Caco-2 (cell line): ENCODE measurements at regions of chr5 and their contacts with region 1.

Region 1: GRCh38 chr5:132820162-132820754 is 7.2 kb downstream of the SOWAHA start:
- DNase-seq: peak; percentile 90
- H3K4me3 ChIP-seq: no peak overlapping the region
- H3K4me3 Mint-ChIP-seq: no peak overlapping the region
- H3K27ac Mint-ChIP-seq: no peak overlapping the region
- H3K4me1 ChIP-seq: no peaks in the 10 kb centered on the region; the same call in none of the 2 replicates
- H3K4me1 Mint-ChIP-seq: no peaks in the 10 kb centered on the region
- H3K27me3 ChIP-seq: no peaks in the 10 kb centered on the region
- H3K27me3 Mint-ChIP-seq: no peaks in the 10 kb centered on the region
- CTCF ChIP-seq: peak; percentile 89

Region 2: GRCh38 chr5:131857388-131857787 is 962.9 kb before region 1 on chr5:
- CTCF ChIA-PET with region 1: no interaction called
- POLR2A ChIA-PET with region 1: no interaction called
- intact Hi-C with region 1: no loop called
- DNase-seq: no peak
- H3K4me3 ChIP-seq: no peak overlapping the region
- H3K4me3 Mint-ChIP-seq: no peak overlapping the region
- H3K27ac Mint-ChIP-seq: no peak overlapping the region
- H3K4me1 ChIP-seq: no peaks in the 10 kb centered on the region
- H3K4me1 Mint-ChIP-seq: no peaks in the 10 kb centered on the region
- H3K27me3 ChIP-seq: no peaks in the 10 kb centered on the region
- H3K27me3 Mint-ChIP-seq: peaks cover 9% of the 10 kb centered on the region
- CTCF ChIP-seq: no peak

Region 3: GRCh38 chr5:132526290-132526973 is 293.8 kb before region 1 on chr5:
- CTCF ChIA-PET with region 1: interaction called, 11 read pairs
- POLR2A ChIA-PET with region 1: no interaction called
- intact Hi-C with region 1: loop called (anchors 1 kb)
- DNase-seq: peak; percentile 63 to 84
- H3K4me3 ChIP-seq: peak overlapping the region; percentile 19; the same call in 1 of the 2 replicates
- H3K4me3 Mint-ChIP-seq: peak overlapping the region; percentile 15
- H3K27ac Mint-ChIP-seq: no peak overlapping the region
- H3K4me1 ChIP-seq: no peaks in the 10 kb centered on the region
- H3K4me1 Mint-ChIP-seq: peaks cover under 1% of the 10 kb centered on the region
- H3K27me3 ChIP-seq: no peaks in the 10 kb centered on the region
- H3K27me3 Mint-ChIP-seq: peaks cover 1% of the 10 kb centered on the region
- CTCF ChIP-seq: peak; percentile 84 to 94

Region 4: DNA sequence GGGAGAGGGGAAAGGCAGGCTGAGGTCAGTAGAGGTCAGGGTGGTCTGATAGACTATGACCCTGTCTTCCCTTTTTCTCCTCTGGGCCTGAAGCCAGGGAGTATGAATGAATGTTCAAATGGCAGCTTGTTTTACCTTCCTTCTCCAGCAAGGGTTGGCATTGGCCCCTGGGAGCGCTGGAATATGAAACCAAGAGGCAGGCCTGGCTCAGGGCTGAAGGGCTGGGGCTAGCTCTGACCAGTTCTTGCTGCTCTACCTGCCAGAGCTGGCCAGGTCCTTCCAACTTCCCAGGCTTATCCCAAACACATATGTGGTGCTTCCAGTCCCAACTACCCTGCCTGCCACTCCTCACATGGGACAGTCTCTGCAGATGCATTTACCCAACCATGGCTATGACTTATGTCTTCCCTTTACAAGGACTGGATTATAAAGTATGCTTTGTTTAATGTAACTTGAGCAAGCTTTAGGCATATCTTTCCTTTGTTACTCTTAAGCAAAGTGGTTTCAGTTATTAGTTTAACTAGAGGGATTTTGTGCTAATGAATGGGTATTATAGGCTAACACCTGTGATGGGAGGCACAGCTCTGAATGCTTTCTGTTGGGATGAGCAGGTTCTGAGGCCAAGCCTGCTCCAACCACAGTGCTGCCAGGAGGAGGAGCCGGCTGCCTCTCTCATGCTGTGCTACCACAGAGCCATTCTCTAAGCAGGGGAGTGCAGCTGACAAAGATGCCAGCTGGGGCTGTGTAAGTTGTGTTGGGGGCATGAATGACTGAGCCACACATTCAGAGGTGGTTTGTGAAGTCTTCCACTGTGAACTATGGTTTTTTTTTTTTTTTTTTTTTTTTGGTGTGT is 66.9 kb before region 1 on chr5:
- CTCF ChIA-PET with region 1: interaction called, 141 read pairs
- POLR2A ChIA-PET with region 1: interaction called, 4 read pairs
- intact Hi-C with region 1: loop called (anchors 1 kb)
- DNase-seq: peak in 1 of 2 experiments; percentile 42
- H3K4me3 ChIP-seq: no peak overlapping the region
- H3K4me3 Mint-ChIP-seq: no peak overlapping the region
- H3K27ac Mint-ChIP-seq: no peak overlapping the region
- H3K4me1 ChIP-seq: no peaks in the 10 kb centered on the region
- H3K4me1 Mint-ChIP-seq: peaks cover 6% of the 10 kb centered on the region
- H3K27me3 ChIP-seq: no peaks in the 10 kb centered on the region
- H3K27me3 Mint-ChIP-seq: no peaks in the 10 kb centered on the region
- CTCF ChIP-seq: peak in 1 of 2 experiments; percentile 36

Region 5: GRCh38 chr5:132797651-132798050 is 22.6 kb before region 1 on chr5:
- CTCF ChIA-PET with region 1: interaction called, 17 read pairs
- POLR2A ChIA-PET with region 1: no interaction called
- intact Hi-C with region 1: no loop called
- DNase-seq: no peak
- H3K4me3 ChIP-seq: no peak overlapping the region
- H3K4me3 Mint-ChIP-seq: no peak overlapping the region
- H3K27ac Mint-ChIP-seq: no peak overlapping the region
- H3K4me1 ChIP-seq: peaks cover 22% of the 10 kb centered on the region
- H3K4me1 Mint-ChIP-seq: peaks cover 13% of the 10 kb centered on the region
- H3K27me3 ChIP-seq: no peaks in the 10 kb centered on the region
- H3K27me3 Mint-ChIP-seq: no peaks in the 10 kb centered on the region
- CTCF ChIP-seq: no peak

Region 6: DNA sequence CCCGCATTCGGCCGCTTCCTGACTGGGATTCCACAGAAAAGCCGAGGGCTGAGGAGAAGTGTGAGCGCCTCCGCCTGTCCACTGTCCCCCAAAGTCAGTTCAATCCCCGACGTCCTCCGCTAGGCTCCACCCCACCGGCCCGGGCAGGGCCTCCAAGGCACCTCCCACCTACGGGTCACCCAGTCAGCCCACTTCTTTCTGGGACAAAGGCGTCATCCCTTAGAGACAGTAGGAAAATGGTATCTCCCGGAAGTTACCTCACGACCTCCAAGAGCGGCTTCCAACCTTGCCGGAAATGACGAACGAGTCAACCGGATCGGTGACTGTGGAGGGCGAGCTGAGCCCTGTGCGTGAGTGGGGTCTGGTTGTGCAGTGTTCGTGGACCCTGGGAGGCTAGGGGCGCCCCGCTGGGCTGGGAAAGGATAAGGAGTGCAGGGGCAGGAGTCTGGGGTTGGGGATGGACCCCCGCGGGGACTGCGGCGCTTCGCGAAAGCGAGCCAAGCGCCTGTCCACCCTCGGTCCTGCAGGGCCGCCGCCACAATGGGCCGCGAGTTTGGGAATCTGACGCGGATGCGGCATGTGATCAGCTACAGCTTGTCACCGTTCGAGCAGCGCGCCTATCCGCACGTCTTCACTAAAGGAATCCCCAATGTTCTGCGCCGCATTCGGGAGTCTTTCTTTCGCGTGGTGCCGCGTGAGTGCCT is 46.2 kb after region 1 on chr5 and contains the starts of genes GDF9 and UQCRQ:
- CTCF ChIA-PET with region 1: interaction called, 16 read pairs
- POLR2A ChIA-PET with region 1: interaction called, 4 read pairs
- intact Hi-C with region 1: no loop called
- DNase-seq: peak; percentile 99
- H3K4me3 ChIP-seq: peak within 1 kb of the TSS; percentile 73
- H3K4me3 Mint-ChIP-seq: peak within 1 kb of the TSS; percentile 91
- H3K27ac Mint-ChIP-seq: peak within 1 kb of the TSS; percentile 98
- H3K4me1 ChIP-seq: peaks cover 16% of the 10 kb centered on the region
- H3K4me1 Mint-ChIP-seq: no peaks in the 10 kb centered on the region
- H3K27me3 ChIP-seq: no peaks in the 10 kb centered on the region
- H3K27me3 Mint-ChIP-seq: no peaks in the 10 kb centered on the region
- CTCF ChIP-seq: peak in 1 of 2 experiments; percentile 54
- total RNA-seq, gene GDF9: 0.59 and 0.81 TPM in 2 replicates
- total RNA-seq, gene UQCRQ: 356 and 449 TPM in 2 replicates